PC-9 (cell line): ENCODE measurements at regions of chr19 and their contacts with region 1.

Region 1: GRCh38 chr19:15466851-15467733 is 2.7 kb upstream of the RASAL3 start:
- DNase-seq: peak in 1 of 2 experiments; percentile 80
- H3K4me3 ChIP-seq: no peak overlapping the region
- H3K27ac ChIP-seq: no peak overlapping the region
- H3K4me1 ChIP-seq: peaks cover 9% of the 10 kb centered on the region; the same call in 1 of the 2 replicates
- H3K27me3 ChIP-seq: no peaks in the 10 kb centered on the region
- CTCF ChIP-seq: no peak

Region 2: GRCh38 chr19:15479391-15480345 is 12.6 kb after region 1 on chr19 and contains the start of gene PGLYRP2:
- CTCF ChIA-PET with region 1: no interaction called
- POLR2A ChIA-PET with region 1: interaction called, 17 read pairs
- intact Hi-C with region 1: no loop called
- DNase-seq: peak; percentile 43 to 56
- H3K4me3 ChIP-seq: no peak within 1 kb of the TSS
- H3K27ac ChIP-seq: no peak within 1 kb of the TSS
- H3K4me1 ChIP-seq: no peaks in the 10 kb centered on the region
- H3K27me3 ChIP-seq: no peaks in the 10 kb centered on the region
- CTCF ChIP-seq: peak; percentile 59
- total RNA-seq, gene PGLYRP2: not detected in 2 replicates

Region 3: GRCh38 chr19:15516363-15516762 is 49.3 kb after region 1 on chr19:
- CTCF ChIA-PET with region 1: no interaction called
- POLR2A ChIA-PET with region 1: interaction called, 11 read pairs
- intact Hi-C with region 1: no loop called
- DNase-seq: no peak
- H3K4me3 ChIP-seq: no peak overlapping the region
- H3K27ac ChIP-seq: no peak overlapping the region
- H3K4me1 ChIP-seq: no peaks in the 10 kb centered on the region
- H3K27me3 ChIP-seq: peaks cover 36% of the 10 kb centered on the region
- CTCF ChIP-seq: no peak